Mammary epithelial cell (primary cell): ENCODE measurements at regions of chr11 and their contacts with region 1.

Region 1: GRCh38 chr11:93908689-93909088 is 58.3 kb upstream of the VSTM5 start:
- DNase-seq: peak; percentile 76
- H3K4me3 ChIP-seq: no peak overlapping the region
- H3K27ac ChIP-seq: no peak overlapping the region
- H3K4me1 ChIP-seq: peaks cover 35% of the 10 kb centered on the region
- H3K27me3 ChIP-seq: no peaks in the 10 kb centered on the region
- CTCF ChIP-seq: no peak

Region 2: GRCh38 chr11:93407777-93408401 is 500.8 kb before region 1 on chr11:
- CTCF ChIA-PET with region 1: no interaction called
- dilution Hi-C with region 1: no loop called
- in situ Hi-C with region 1: no loop called
- intact Hi-C with region 1: no loop called
- DNase-seq: peak; percentile 26
- H3K4me3 ChIP-seq: no peak overlapping the region
- H3K27ac ChIP-seq: no peak overlapping the region
- H3K4me1 ChIP-seq: no peaks in the 10 kb centered on the region
- H3K27me3 ChIP-seq: peaks cover 7% of the 10 kb centered on the region
- CTCF ChIP-seq: no peak

Region 3: DNA sequence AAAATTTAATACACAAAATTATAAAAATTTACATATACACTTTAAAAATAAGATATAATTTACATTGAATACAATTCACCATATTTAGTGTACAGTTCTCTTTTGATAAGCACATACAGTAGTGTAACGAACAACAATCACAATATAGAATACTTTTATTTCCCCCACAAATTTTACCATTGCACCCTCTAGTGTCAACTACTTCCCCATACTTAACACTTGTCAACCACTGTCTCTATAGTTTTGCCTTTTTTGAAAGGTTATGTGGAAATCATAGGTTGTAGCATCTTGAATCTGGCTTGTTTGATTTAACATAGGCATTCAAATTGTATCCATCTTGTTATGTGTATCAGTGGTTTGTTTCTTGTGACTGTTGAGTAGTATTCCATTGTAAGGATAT is 198.7 kb after region 1 on chr11:
- CTCF ChIA-PET with region 1: no interaction called
- dilution Hi-C with region 1: no loop called
- in situ Hi-C with region 1: loop called in 1 of 2 experiments (anchors 10 kb)
- intact Hi-C with region 1: no loop called
- DNase-seq: no peak
- H3K4me3 ChIP-seq: no peak overlapping the region
- H3K27ac ChIP-seq: no peak overlapping the region
- H3K4me1 ChIP-seq: peaks cover 14% of the 10 kb centered on the region
- H3K27me3 ChIP-seq: no peaks in the 10 kb centered on the region
- CTCF ChIP-seq: peak in 1 of 2 donors; percentile 51

Region 4: GRCh38 chr11:94171693-94172440 is 263.2 kb after region 1 on chr11:
- CTCF ChIA-PET with region 1: no interaction called
- dilution Hi-C with region 1: loop called (anchors 5 kb)
- in situ Hi-C with region 1: no loop called
- intact Hi-C with region 1: no loop called
- DNase-seq: peak; percentile 10
- H3K4me3 ChIP-seq: no peak overlapping the region
- H3K27ac ChIP-seq: no peak overlapping the region
- H3K4me1 ChIP-seq: peaks cover 8% of the 10 kb centered on the region
- H3K27me3 ChIP-seq: no peaks in the 10 kb centered on the region
- CTCF ChIP-seq: peak; percentile 67 to 73